Endothelial cell of umbilical vein (primary cell): ENCODE measurements at regions of chr2 and their contacts with region 1.

Region 1: DNA sequence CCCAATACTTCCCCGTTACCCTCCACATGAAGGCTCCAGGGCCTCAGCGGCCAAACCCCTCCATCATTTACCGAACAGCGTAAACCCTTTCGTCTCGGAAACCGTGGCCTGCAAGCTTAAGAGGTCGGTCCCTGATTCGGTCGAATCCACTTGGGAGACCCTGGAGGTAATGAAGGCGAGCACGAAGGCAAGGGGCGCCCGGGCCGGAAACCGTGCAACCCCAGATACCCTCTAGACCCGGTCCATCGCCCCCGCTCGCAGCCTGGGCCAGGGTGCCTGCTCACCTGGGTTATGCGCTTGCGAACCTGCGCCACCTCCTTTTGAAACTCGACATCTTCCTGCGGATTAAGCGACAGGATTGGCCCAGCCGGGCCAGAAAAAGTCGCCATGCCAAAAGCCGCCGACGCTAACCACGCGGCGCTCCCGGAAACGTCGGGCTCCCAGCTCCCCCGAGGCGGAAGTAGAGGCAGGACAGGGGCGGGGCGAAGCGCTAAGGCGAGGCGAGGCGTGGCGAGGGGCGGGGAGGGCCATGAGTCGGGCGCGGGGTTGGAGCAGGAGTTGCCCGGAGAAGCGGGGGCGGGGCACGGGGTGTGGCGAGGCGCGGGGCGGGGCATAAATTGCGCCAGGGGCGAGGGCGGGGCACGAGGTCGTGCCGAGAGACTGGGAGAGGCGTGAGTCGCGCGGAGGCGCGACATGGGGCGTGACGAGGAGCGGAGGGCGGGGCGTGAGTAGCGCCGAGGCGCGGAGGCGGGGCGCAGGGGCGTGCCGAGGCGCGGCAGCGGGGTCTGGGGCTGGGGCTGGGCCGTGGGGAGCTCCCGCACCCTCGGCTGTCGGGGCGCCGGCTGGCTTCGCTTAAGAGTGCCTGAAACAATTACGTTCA is at the start of gene NIFK:
- DNase-seq: peak; percentile 97
- H3K4me3 ChIP-seq: peak within 1 kb of the TSS; percentile 91 to 100 (median 99)
- H3K27ac ChIP-seq: peak within 1 kb of the TSS; percentile 59
- H3K4me1 ChIP-seq: peaks cover 9% of the 10 kb centered on the region
- H3K27me3 ChIP-seq: no peaks in the 10 kb centered on the region
- CTCF ChIP-seq: no peak
- POLR2A ChIP-seq: peak; percentile 85
- total RNA-seq, gene NIFK: 56.2 and 59.7 TPM in 2 replicates

Region 2: DNA sequence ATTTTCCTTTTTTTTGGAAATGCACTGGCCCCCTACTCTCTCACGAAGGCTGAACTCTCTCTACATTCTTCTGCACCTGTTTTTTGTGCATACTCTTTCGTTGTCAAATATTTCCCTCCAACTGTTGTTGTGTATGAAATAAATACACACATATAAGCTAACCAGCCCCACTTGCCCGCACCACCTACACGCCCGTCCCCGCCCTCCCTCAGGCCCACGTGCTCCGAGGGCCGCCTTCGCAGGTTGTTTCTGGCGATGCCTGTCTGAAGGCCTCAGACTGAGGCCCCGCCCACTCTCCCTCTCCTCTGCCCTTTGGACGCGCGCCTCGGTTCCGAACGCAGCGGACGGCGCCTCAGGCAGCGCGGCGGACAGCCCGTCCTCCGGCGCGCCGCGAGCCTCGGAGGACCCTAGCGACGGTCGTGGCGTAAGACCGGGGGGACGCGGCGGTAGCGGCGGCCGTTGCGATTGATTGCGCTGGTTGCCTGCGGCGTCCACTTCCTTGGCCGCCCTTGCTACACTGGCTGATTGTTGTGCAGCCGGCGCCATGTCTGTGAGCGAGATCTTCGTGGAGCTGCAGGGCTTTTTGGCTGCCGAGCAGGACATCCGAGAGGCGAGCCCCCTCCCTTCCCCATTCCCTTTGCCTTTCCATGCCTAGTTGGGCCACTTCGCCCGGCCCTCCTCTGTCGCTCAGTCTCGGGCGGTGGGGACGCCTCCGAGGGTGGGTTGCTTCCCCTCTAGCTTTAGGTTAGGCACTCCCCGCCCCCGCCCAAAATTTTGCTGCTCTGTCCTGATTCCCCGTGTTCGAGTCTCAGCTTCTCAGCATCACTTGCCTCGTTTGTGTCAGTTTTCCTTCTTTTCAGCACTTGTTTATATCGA is 18.8 kb after region 1 on chr2 and contains the start of gene TSN:
- CTCF ChIA-PET with region 1: no interaction called
- POLR2A ChIA-PET with region 1: no interaction called
- dilution Hi-C with region 1: no loop called
- intact Hi-C with region 1: loop called (anchors 1 kb)
- DNase-seq: peak; percentile 98
- H3K4me3 ChIP-seq: peak within 1 kb of the TSS; percentile 83 to 97 (median 89)
- H3K27ac ChIP-seq: peak within 1 kb of the TSS; percentile 75
- H3K4me1 ChIP-seq: peaks cover 16% of the 10 kb centered on the region
- H3K27me3 ChIP-seq: no peaks in the 10 kb centered on the region
- CTCF ChIP-seq: no peak
- POLR2A ChIP-seq: peak; percentile 43
- total RNA-seq, gene TSN: 76.1 and 79.8 TPM in 2 replicates

Region 3: DNA sequence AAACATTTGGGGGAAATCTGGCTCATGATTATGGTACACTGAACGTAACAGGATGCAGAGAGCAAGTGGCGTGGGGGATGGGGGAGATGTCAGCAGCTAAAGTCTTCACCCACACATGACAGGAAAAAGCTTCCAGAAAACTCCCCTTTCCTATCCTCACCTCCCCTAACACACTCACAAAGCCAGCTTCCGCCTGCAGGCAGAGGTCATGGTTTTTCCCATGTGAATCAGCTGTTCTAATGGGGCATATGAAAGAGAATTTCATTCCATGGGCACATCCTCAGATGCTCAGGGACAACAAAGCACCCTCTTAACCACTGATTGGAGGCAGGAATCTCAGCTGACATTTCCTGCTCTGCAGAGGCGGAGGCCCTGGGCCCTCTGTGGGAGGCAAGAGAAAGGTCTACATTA is 147.8 kb after region 1 on chr2:
- CTCF ChIA-PET with region 1: no interaction called
- POLR2A ChIA-PET with region 1: no interaction called
- dilution Hi-C with region 1: no loop called
- intact Hi-C with region 1: no loop called
- DNase-seq: no peak
- H3K4me3 ChIP-seq: no peak overlapping the region
- H3K27ac ChIP-seq: no peak overlapping the region
- H3K4me1 ChIP-seq: no peaks in the 10 kb centered on the region
- H3K27me3 ChIP-seq: no peaks in the 10 kb centered on the region
- CTCF ChIP-seq: no peak
- POLR2A ChIP-seq: no peak